B cell (primary cell): ENCODE measurements at regions of chr2 and their contacts with region 1.

Region 1: GRCh38 chr2:84888401-84889276 is 7.8 kb upstream of the TRABD2A start:
- DNase-seq: peak; percentile 81
- ATAC-seq: peak; percentile 100
- H3K4me3 ChIP-seq: peak overlapping the region in 4 of 5 experiments; percentile 21 to 46 (median 24)
- H3K4me3 Mint-ChIP-seq: peak overlapping the region; percentile 77
- H3K27ac ChIP-seq: peak overlapping the region; percentile 89 to 93
- H3K27ac Mint-ChIP-seq: peak overlapping the region; percentile 98
- H3K4me1 ChIP-seq: peaks cover 19 to 20% of the 10 kb centered on the region in 2 donors
- H3K4me1 Mint-ChIP-seq: peaks cover 16% of the 10 kb centered on the region
- H3K27me3 ChIP-seq: no peaks in the 10 kb centered on the region
- H3K27me3 Mint-ChIP-seq: no peaks in the 10 kb centered on the region
- CTCF ChIP-seq: no peak

Region 2: GRCh38 chr2:84459018-84459943 is 429.4 kb before region 1 on chr2 and contains the start of gene SUCLG1:
- CTCF ChIA-PET with region 1: no interaction called
- POLR2A ChIA-PET with region 1: no interaction called
- intact Hi-C with region 1: loop called (anchors 2 kb)
- DNase-seq: peak; percentile 94
- ATAC-seq: peak; percentile 97
- H3K4me3 ChIP-seq: peak within 1 kb of the TSS; percentile 67 to 95 (median 91)
- H3K4me3 Mint-ChIP-seq: peak within 1 kb of the TSS; percentile 93
- H3K27ac ChIP-seq: peak within 1 kb of the TSS; percentile 84 to 93
- H3K27ac Mint-ChIP-seq: peak within 1 kb of the TSS; percentile 97
- H3K4me1 ChIP-seq: peaks cover 20 to 23% of the 10 kb centered on the region in 2 donors
- H3K4me1 Mint-ChIP-seq: peaks cover 37% of the 10 kb centered on the region
- H3K27me3 ChIP-seq: no peaks in the 10 kb centered on the region
- H3K27me3 Mint-ChIP-seq: no peaks in the 10 kb centered on the region
- CTCF ChIP-seq: no peak
- total RNA-seq, gene SUCLG1: 31.8 and 33.6 TPM in 2 replicates

Region 3: GRCh38 chr2:84776011-84776410 is 112.6 kb before region 1 on chr2:
- CTCF ChIA-PET with region 1: no interaction called
- POLR2A ChIA-PET with region 1: no interaction called
- intact Hi-C with region 1: no loop called
- DNase-seq: no peak
- ATAC-seq: no peak
- H3K4me3 ChIP-seq: no peak overlapping the region
- H3K4me3 Mint-ChIP-seq: no peak overlapping the region
- H3K27ac ChIP-seq: no peak overlapping the region
- H3K27ac Mint-ChIP-seq: no peak overlapping the region
- H3K4me1 ChIP-seq: peaks cover 8 to 9% of the 10 kb centered on the region in 2 donors
- H3K4me1 Mint-ChIP-seq: peaks cover 13% of the 10 kb centered on the region
- H3K27me3 ChIP-seq: no peaks in the 10 kb centered on the region
- H3K27me3 Mint-ChIP-seq: no peaks in the 10 kb centered on the region
- CTCF ChIP-seq: no peak

Region 4: DNA sequence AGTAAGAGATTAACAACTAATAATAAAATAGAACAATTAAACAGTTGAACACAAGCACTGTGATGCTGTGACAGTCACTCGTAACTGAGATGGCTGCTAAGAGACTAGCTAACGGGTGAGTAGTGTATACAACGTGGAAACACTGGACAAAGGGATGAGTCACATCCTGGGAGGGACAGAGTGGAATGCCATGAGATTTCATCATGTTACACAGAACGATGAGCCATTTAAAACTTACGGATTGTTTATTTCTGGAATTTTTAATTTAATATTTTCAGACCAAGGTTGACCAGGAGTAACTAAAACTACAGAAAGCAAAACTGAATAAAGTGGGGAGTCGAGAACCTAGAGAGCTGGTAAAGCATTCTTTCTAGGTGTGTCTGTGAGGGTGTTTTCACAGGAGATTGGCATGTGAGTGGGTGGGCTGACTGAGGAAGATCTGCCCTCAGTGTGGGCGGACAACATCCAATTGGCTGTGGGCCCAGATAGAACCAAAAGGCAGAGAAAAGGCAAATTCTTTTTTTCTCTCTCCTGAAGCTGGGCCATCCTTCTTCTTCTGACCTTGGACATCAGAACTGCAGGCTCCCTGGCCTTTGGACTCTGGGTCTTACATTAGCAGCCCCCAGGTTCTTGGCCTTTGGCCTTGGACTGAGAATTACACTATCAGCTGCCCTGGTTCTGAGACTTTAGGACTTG is 31.4 kb after region 1 on chr2:
- CTCF ChIA-PET with region 1: interaction called, 316 read pairs
- POLR2A ChIA-PET with region 1: interaction called, 10 read pairs
- intact Hi-C with region 1: no loop called
- DNase-seq: peak; percentile 52
- ATAC-seq: peak; percentile 52
- H3K4me3 ChIP-seq: peak overlapping the region in 4 of 5 experiments; percentile 8 to 55 (median 24)
- H3K4me3 Mint-ChIP-seq: peak overlapping the region; percentile 64
- H3K27ac ChIP-seq: peak overlapping the region; percentile 89 to 90
- H3K27ac Mint-ChIP-seq: peak overlapping the region; percentile 84
- H3K4me1 ChIP-seq: peaks cover 51 to 60% of the 10 kb centered on the region in 2 donors
- H3K4me1 Mint-ChIP-seq: peaks cover 56% of the 10 kb centered on the region
- H3K27me3 ChIP-seq: no peaks in the 10 kb centered on the region
- H3K27me3 Mint-ChIP-seq: no peaks in the 10 kb centered on the region
- CTCF ChIP-seq: no peak

Region 5: GRCh38 chr2:86453836-86454235 is 1565.2 kb after region 1 on chr2:
- CTCF ChIA-PET with region 1: no interaction called
- POLR2A ChIA-PET with region 1: no interaction called
- intact Hi-C with region 1: no loop called
- DNase-seq: no peak
- ATAC-seq: no peak
- H3K4me3 ChIP-seq: no peak overlapping the region
- H3K4me3 Mint-ChIP-seq: no peak overlapping the region
- H3K27ac ChIP-seq: no peak overlapping the region
- H3K27ac Mint-ChIP-seq: no peak overlapping the region
- H3K4me1 ChIP-seq: no peaks in the 10 kb centered on the region
- H3K4me1 Mint-ChIP-seq: peaks cover 2% of the 10 kb centered on the region
- H3K27me3 ChIP-seq: no peaks in the 10 kb centered on the region
- H3K27me3 Mint-ChIP-seq: no peaks in the 10 kb centered on the region
- CTCF ChIP-seq: no peak